HEK293 (cell line): ENCODE measurements at regions of chrX and their contacts with region 1.

Region 1: GRCh38 chrX:109475174-109475891 is 6.6 kb downstream of the GUCY2F start:
- H3K4me3 ChIP-seq: no peak overlapping the region
- H3K27ac ChIP-seq: no peak overlapping the region
- H3K4me1 ChIP-seq: no peaks in the 10 kb centered on the region
- CTCF ChIP-seq: peak; percentile 44

Region 2: DNA sequence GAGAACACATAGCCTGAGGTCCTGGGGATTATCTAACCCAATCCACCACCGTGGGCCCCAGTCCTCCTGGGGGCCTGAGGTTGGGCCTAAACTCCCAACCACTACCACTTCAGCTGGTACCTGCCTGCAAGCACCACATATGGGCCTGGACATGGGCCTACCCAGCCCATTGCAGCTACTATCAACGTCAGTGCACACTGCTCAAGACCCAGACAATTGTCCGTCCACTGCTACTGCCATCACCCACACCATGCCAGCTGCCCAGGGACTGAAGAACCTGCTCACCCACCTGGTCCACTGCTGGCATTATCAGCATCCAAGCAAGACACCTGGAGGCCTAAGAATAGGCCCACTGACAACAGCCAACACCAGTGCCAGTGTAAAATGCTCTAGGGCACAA is 947.6 kb before region 1 on chrX:
- CTCF ChIA-PET with region 1: no interaction called
- POLR2A ChIA-PET with region 1: no interaction called
- H3K4me3 ChIP-seq: no peak overlapping the region
- H3K27ac ChIP-seq: no peak overlapping the region
- H3K4me1 ChIP-seq: no peaks in the 10 kb centered on the region
- CTCF ChIP-seq: no peak

Region 3: GRCh38 chrX:109392895-109393294 is 82.4 kb before region 1 on chrX:
- CTCF ChIA-PET with region 1: interaction called, 10 read pairs
- POLR2A ChIA-PET with region 1: no interaction called
- H3K4me3 ChIP-seq: no peak overlapping the region
- H3K27ac ChIP-seq: no peak overlapping the region
- H3K4me1 ChIP-seq: no peaks in the 10 kb centered on the region
- CTCF ChIP-seq: no peak

Region 4: GRCh38 chrX:109464231-109464630 is 11.1 kb before region 1 on chrX:
- CTCF ChIA-PET with region 1: interaction called, 20 read pairs
- POLR2A ChIA-PET with region 1: no interaction called
- H3K4me3 ChIP-seq: no peak overlapping the region
- H3K27ac ChIP-seq: no peak overlapping the region
- H3K4me1 ChIP-seq: no peaks in the 10 kb centered on the region
- CTCF ChIP-seq: no peak